Activated CD8-positive, alpha-beta memory T cell treated with anti-CD3 and anti-CD28 coated beads, Interleukin-2, amount 10 ng/mL, durations not matched to agents 7 days and 5 days (primary cell): ENCODE measurements at regions of chr14 and their contacts with region 1.

Region 1: DNA sequence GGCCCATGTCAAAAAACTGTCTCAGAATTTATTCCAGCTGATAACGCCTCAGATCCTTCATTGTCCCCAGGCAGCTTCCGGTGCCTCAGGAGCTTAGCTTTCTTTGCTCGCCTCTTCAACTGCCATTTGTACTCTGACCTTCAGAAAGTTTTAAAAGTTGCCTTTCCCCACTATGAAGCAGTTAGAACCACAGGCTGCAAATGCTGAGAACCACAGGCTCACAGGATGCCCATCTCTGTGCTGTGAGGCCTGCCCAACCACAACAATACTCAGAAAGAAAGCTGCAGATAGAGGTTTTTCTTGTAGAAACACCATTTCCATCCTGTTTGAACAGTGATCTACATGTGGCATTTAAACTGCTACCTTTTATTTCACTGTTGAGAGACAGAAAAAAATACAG is 131.1 kb downstream of the PRKCH start:
- DNase-seq: peak; percentile 94
- ATAC-seq: peak; percentile 80
- H3K4me3 Mint-ChIP-seq: peak overlapping the region; percentile 54
- H3K27ac Mint-ChIP-seq: peak overlapping the region; percentile 94
- H3K4me1 Mint-ChIP-seq: peaks cover 97% of the 10 kb centered on the region
- H3K27me3 Mint-ChIP-seq: no peaks in the 10 kb centered on the region

Region 2: DNA sequence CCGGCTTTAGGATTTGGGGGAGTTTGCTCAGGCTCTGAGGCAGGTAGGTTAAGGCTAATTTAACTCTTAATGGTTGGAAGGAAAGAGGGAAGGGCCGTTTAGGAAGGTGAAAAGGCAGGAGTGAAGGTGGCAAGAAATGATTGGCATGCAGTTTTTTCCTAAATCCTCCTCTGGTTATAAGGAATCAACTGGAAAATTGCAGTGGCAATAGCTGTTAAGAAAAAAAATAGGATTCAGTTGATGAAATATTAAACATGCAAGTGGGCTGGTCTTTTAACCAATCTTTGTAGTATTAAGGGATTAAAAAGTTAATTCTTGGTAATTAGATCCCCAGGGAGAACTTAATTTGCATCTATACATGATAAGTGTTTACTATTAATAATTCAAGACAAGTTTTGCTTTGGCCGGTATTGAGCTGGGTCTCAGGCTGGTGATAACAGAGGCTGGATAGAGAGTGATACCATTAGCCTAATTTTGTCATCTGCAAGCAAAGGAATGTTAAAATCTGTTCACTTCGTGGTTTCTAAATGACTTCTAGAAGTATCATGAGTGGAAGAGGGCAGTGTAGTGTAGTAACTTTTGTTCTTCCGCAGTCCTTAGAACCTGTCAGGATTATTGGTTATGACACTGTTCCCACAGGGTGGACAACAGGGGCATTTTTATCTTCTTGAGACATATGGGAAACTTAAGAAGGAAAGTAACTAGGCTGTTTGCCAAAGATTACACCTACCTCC is 12.6 kb before region 1 on chr14:
- CTCF ChIA-PET with region 1: interaction called, 19 read pairs
- DNase-seq: no peak
- ATAC-seq: no peak
- H3K4me3 Mint-ChIP-seq: peak overlapping the region; percentile 75
- H3K27ac Mint-ChIP-seq: peak overlapping the region; percentile 92
- H3K4me1 Mint-ChIP-seq: peaks cover 94% of the 10 kb centered on the region
- H3K27me3 Mint-ChIP-seq: no peaks in the 10 kb centered on the region

Region 3: DNA sequence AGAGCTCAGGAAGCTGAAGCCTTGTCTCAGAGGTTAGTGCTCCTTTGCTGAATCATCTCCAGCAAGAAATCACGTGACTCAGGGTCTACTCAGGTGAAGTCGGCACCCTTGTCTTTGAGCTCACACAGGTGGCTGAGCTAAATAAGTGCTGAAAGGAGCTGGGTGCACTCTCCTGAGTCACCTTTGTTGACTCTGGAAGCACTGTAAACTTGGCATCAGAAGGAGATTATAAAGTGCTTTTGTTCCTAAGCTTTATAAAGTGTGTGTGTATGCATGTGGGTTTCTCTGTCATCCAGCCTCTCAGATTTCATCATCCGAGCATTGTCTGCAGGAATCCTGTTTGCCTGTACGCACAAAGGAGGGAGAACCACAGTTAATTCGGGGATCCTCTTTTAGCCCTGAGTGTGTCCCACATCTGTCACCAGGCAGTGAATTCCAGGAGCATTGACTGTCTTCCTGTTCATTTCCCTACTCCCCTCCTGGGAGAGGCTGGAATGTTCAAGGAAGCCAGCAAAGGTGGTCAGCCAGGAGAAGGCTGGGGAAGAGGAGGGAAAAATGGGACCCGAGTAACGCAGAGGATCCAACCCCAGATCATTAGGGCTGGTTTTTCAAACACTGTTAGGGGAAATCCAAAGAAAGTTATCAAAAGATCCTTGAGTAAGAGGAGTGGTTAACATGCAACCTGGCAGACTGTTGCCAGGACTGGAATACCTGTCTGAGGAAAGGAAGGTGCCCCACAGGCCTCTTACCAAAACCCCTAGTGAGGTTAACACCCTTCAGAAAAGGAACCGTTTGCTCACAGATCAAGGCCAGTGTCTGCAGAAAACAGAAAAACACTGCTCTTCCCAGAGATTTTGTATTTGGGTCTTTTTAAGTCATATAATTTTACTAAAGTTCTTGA is 85.4 kb after region 1 on chr14:
- CTCF ChIA-PET with region 1: no interaction called
- DNase-seq: no peak
- ATAC-seq: peak; percentile 24
- H3K4me3 Mint-ChIP-seq: no peak overlapping the region
- H3K27ac Mint-ChIP-seq: peak overlapping the region; percentile 61
- H3K4me1 Mint-ChIP-seq: peaks cover 70% of the 10 kb centered on the region
- H3K27me3 Mint-ChIP-seq: no peaks in the 10 kb centered on the region